Adrenal gland (tissue), 19 donors: ENCODE measurements at regions of chr21 and their contacts with region 1.

Region 1: GRCh38 chr21:42145569-42146272 is 73.2 kb upstream of the ABCG1 start:
- DNase-seq: peak; percentile 56 to 79 (median 63)
- H3K4me3 ChIP-seq: no peak overlapping the region
- H3K27ac ChIP-seq: no peak overlapping the region
- H3K4me1 ChIP-seq: no peaks in the 10 kb centered on the region
- H3K27me3 ChIP-seq: no peaks in the 10 kb centered on the region
- CTCF ChIP-seq: peak; percentile 88 to 97 (median 92)
- POLR2A ChIP-seq: no peak

Region 2: DNA sequence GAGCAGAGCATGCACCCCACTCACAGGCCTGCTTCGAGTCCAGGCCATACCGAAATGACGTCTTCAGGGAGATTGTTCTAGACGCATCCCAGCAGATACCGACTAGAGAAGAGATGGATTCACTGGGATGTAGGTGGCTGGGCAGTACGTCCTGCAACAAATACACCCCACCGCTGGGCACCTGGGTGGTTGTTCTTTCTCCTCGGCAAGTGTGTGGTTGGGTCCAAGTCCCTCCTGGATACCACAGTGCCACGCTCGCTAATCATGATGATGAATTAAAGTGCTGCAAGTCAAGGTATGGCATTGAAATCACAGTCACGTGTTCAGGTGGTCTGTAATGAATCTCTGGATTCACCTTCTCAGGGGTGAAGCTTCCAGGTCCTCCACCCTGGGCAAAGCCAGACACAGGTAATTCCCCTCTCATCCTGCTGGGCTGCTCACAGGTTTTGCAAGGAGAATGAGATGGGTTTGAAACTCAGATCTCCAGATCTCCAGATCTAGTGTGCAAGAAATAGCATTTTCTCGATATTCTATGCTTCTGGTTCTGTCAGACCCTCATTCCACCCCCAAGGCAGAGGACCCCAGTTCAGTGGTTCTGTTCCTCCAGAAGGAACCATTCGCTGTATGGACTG is 303.7 kb after region 1 on chr21:
- intact Hi-C with region 1: loop called in 1 of 2 experiments (anchors 5 kb)
- DNase-seq: no peak
- H3K4me3 ChIP-seq: no peak overlapping the region
- H3K27ac ChIP-seq: peak overlapping the region in 1 of 5 donors; percentile 17
- H3K4me1 ChIP-seq: no peaks in the 10 kb centered on the region
- H3K27me3 ChIP-seq: no peaks in the 10 kb centered on the region
- CTCF ChIP-seq: no peak
- POLR2A ChIP-seq: no peak